ENCODE measurements at regions of chr1 and their contacts with region 1.

Region 1: GRCh38 chr1:211632631-211633523 is 42.5 kb downstream of the NEK2 start:
- DNase-seq: peak; percentile 98
- H3K4me3 Mint-ChIP-seq: peak overlapping the region; percentile 45
- H3K27ac Mint-ChIP-seq: peak overlapping the region; percentile 84
- H3K4me1 Mint-ChIP-seq: peaks cover 45% of the 10 kb centered on the region
- H3K27me3 Mint-ChIP-seq: no peaks in the 10 kb centered on the region
- CTCF ChIP-seq: no peak

Region 2: GRCh38 chr1:211548321-211549091 is 84.4 kb before region 1 on chr1:
- CTCF ChIA-PET with region 1: no interaction called
- POLR2A ChIA-PET with region 1: no interaction called
- intact Hi-C with region 1: no loop called
- DNase-seq: peak; percentile 45
- H3K4me3 Mint-ChIP-seq: no peak overlapping the region
- H3K27ac Mint-ChIP-seq: no peak overlapping the region
- H3K4me1 Mint-ChIP-seq: peaks cover 14% of the 10 kb centered on the region
- H3K27me3 Mint-ChIP-seq: no peaks in the 10 kb centered on the region
- CTCF ChIP-seq: no peak

Region 3: DNA sequence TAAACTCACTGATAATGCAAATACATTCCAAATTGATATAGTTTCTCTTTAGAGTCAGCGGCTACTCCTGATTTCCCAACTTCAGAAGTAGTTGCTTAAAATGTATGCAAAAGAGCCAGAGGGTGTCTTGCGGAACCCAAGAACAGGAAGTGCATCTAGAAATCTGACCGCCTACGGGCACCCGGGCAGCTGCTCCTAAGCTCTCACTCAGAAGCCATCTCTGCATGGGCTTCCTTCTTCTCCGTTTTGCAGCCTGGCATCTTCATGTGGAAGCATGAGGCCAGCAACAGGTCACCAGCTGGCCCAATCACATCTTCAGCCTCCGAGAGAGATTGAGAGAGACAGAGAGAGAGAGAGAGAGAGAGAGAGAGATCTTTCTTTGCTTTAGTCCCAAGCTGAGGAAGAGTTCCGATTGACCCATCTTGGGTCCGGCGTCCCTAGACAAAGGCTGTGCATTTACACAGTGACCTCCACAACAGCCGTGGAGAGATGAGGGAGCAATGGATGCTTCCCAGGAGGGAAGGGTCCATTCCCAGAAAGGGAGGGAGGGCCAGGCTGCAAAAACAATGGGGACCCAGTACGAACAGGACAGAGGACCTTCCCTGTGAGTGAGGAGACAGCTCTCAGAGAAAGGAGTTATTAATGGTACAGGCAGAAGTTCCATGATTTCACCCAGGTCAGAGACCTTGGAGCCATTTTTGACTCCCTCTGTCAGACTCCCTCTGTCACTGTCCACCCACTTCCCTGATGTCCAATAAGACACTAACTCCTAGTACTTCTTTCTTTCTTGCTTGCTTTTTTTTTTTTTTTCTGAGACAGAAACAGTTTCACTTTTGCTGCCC is 25.7 kb before region 1 on chr1:
- CTCF ChIA-PET with region 1: interaction called, 10 read pairs
- POLR2A ChIA-PET with region 1: interaction called, 81 read pairs
- intact Hi-C with region 1: loop called (anchors 2 kb)
- DNase-seq: peak; percentile 73
- H3K4me3 Mint-ChIP-seq: no peak overlapping the region
- H3K27ac Mint-ChIP-seq: no peak overlapping the region
- H3K4me1 Mint-ChIP-seq: peaks cover 40% of the 10 kb centered on the region
- H3K27me3 Mint-ChIP-seq: no peaks in the 10 kb centered on the region
- CTCF ChIP-seq: no peak

Region 4: DNA sequence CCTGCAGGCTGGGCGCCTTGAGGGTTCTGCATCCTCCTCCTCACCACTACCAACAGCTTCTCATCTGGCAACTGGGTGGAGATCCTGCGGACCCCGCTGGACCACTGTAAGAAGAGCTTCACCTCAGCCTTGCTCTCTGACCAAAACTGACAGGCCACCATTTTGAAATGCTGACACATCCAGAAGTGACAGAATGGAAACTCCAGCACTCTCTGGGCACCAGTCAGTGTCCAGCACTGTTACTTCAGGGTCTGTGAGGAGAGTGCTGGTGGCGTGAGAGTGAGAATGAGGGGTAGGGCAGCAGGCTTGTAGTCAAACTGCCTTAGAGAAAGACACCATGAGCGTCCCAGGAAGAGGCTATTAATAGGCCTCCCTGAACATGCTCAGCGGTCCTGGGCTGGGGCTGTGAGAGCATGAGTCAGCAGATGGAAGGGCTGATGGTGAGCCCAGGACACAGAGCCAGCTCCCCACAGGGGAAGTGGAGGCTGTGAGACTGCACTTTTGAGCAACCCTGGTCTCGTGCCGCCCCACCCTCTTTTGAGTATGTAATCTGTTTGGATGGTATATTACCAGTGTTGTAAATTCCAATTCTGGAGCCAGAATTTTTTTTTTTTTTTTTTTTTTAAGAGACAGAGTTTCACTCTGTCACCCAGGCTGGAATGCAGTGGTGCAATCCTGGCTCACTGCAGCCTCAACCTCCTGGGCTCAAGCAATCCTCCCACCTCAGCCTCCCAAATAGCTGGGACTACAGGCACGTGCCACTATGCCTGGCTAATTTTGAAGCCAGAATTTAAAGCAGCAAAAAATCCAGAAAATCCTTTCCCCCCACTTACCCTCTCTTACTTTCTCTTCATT is 19.6 kb before region 1 on chr1:
- CTCF ChIA-PET with region 1: interaction called, 17 read pairs
- POLR2A ChIA-PET with region 1: interaction called, 81 read pairs
- intact Hi-C with region 1: loop called (anchors 2 kb)
- DNase-seq: peak; percentile 100
- H3K4me3 Mint-ChIP-seq: peak overlapping the region; percentile 33
- H3K27ac Mint-ChIP-seq: peak overlapping the region; percentile 61
- H3K4me1 Mint-ChIP-seq: peaks cover 37% of the 10 kb centered on the region
- H3K27me3 Mint-ChIP-seq: no peaks in the 10 kb centered on the region
- CTCF ChIP-seq: no peak

Region 5: DNA sequence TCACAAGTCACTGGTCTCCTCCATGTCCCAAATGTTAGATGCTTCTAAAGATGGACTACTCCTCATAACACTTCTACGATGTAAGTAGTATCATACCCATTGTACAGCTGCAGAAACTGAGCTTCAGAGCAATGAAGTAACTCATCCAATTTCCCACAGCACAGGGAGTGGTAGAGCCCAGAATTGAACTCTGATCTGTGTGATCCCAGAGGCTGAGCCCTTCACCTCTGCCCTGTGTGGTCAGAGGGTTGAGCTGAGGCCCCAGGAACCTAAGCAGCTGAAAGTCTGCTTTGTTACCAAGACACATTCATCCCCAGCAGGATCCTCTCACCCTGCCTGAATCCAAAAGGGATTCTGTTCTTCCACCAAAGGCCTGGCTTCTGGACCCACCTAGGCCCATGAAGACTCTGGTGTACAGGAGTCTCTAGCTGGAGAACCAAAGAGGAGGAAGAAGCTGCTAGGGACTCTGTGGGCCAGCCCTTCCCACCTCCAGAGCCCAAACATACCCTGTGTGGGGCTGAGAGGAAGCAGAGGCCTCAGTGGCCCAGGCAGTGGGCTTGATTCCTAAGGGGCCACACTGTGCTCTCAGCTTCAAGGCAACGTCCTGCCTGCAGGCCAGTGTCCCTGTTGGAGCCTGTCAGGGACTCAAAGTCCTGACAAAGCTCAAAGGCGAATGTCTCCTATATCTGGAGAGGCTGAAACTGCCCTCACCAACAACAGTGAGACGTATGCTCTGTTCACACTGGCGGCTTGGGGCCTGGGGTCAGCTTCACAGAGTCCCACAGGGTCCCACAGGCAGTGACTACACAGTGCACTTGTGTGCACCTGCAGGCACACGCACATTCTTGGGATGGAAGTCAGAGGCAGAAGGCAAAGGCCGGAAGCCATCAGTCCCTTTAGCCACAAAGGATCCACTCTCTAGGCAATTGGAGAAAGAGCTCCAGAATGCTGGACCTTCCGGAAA is 13.6 kb before region 1 on chr1:
- CTCF ChIA-PET with region 1: interaction called, 17 read pairs
- POLR2A ChIA-PET with region 1: interaction called, 81 read pairs
- intact Hi-C with region 1: no loop called
- DNase-seq: no peak
- H3K4me3 Mint-ChIP-seq: no peak overlapping the region
- H3K27ac Mint-ChIP-seq: no peak overlapping the region
- H3K4me1 Mint-ChIP-seq: peaks cover 5% of the 10 kb centered on the region
- H3K27me3 Mint-ChIP-seq: no peaks in the 10 kb centered on the region
- CTCF ChIP-seq: no peak

Region 6: DNA sequence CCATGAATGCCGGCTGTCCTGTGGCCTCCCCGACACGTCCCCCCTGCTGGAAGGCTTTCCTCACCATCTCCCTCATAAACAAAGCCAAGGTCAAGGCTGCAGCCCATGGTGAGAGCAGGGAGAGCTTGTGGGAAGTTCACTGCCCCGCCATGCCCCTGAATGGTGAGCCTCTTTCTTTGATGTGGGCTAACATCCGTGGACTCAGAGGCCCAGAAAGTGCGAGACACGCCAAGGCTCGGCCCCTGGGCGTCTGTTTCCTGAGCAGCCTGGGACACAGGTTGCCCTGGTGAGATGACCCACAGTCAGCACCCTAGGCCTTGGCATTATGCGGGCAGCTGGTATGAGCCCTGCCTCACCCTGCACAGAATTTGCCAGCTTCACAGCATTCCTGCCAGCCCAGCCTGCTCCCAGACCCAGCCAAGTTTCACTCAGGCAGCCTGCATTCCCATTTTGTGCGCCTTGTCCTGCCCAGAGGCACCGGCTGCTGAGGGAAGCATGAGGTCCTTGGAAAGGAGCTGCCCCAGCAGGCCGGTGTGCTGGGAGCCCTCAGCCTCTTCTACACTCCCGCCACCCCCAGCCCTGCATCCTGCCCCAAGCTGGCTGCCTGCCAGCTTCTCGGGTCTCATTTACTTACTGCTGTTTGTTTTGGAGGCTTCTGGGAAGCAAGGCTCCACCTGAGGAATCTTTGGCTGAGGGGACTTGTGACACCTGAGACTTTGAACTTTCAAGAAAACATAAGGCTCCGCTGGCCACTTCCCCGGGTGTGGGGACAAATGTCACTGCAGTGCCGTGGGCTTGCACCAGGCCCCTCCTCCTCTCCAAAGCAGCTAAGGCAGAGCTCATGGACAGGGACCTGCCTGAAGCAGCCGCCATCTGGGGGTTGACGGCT is 10.7 kb after region 1 on chr1:
- CTCF ChIA-PET with region 1: interaction called, 94 read pairs
- POLR2A ChIA-PET with region 1: interaction called, 94 read pairs
- intact Hi-C with region 1: no loop called
- DNase-seq: peak; percentile 97
- H3K4me3 Mint-ChIP-seq: peak overlapping the region; percentile 45
- H3K27ac Mint-ChIP-seq: peak overlapping the region; percentile 88
- H3K4me1 Mint-ChIP-seq: peaks cover 56% of the 10 kb centered on the region
- H3K27me3 Mint-ChIP-seq: no peaks in the 10 kb centered on the region
- CTCF ChIP-seq: no peak

Region 7: DNA sequence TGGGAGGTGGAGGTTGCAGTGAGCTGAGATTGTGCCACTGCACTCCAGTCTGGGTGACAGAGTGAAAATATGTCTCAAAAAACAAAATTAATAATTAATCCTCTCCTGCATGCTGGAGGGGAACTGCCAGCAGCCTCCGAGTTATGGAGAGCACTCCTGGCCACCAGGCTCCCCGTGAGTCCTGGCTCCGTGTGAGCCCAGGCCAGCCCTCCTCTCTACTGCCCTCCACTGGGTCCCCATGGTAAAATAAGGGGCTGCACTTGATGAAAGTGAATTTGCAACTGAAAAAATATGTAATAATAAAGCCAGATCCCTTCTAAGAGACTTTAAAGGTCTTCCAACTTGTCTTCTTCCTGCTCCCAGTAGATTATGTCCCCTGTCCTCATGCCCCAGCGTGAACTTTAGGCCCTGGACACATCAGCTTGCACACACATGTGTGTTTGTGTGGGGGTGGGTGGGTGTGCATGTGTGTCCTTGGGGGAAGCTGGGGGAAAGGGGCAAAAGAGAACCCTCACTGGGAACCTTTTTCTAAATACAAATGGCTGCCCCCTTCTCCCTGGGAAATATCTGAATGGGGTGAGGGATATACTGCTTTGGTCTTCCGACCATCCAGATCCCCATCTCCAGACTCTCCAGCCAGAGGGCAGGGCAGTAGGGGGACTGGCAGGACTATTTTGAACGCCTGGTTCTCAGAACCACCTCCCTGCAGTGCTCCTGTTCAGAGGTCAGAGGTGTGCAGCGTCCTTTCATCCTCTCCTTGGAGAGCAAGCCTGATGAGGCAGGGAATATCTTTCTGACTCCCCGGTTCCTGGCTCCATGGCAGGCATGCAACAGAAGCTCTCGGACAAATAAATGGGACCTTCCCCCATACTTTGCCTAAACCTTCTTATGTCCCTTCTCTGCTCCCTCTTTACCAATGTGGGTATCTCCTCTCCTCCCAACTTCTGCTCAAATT is 16.4 kb after region 1 on chr1:
- CTCF ChIA-PET with region 1: interaction called, 94 read pairs
- POLR2A ChIA-PET with region 1: interaction called, 94 read pairs
- intact Hi-C with region 1: no loop called
- DNase-seq: no peak
- H3K4me3 Mint-ChIP-seq: no peak overlapping the region
- H3K27ac Mint-ChIP-seq: peak overlapping the region; percentile 1
- H3K4me1 Mint-ChIP-seq: peaks cover 37% of the 10 kb centered on the region
- H3K27me3 Mint-ChIP-seq: no peaks in the 10 kb centered on the region
- CTCF ChIP-seq: peak; percentile 22